ENCODE measurements at regions of chr14 and their contacts with region 1.

Region 1: DNA sequence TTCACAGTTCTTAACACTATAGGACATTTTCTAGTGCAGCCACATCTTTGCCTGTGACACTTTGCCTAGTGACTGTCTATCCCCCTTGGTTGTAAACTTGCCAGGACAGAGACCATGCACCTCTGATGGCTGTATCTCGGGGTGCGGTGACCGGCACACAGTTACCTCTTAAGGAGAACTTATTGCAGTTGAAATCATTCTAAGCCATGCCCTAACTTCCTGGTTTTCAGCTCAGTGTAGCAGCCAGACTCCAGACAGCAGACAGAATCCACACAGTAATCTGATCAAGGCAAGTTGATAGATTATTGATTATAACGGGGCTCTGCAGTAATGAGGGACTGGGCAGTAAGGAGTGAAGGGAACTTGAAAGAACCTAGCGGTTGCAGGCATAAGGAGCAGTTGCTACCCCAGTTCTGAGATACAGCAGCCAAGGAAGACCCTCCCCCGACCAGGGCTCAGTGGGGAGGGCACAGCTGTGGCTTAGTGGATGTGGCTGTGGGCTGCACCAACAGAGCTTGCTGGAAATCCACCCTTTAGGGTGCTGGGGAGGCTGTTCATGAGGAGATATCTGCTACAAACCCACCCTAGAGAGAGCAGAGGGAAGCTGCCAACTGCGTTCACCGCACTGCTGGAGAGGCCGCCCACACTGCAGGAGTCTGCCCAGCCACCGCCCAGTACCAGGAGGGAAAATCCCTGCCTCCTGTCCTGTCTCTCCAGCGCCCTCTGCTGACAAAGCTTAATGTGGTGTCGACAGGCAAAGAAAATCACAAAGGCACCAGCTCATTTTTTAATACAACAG is 58.2 kb upstream of the BEGAIN start:
- DNase-seq: peak; percentile 97
- H3K4me3 Mint-ChIP-seq: no peak overlapping the region
- H3K27ac Mint-ChIP-seq: no peak overlapping the region
- H3K4me1 Mint-ChIP-seq: peaks cover 30% of the 10 kb centered on the region
- H3K27me3 Mint-ChIP-seq: no peaks in the 10 kb centered on the region

Region 2: GRCh38 chr14:100383727-100384158 is 261.6 kb before region 1 on chr14:
- CTCF ChIA-PET with region 1: interaction called, 125 read pairs
- intact Hi-C with region 1: loop called (anchors 1 kb)
- DNase-seq: peak; percentile 73
- H3K4me3 Mint-ChIP-seq: no peak overlapping the region
- H3K27ac Mint-ChIP-seq: no peak overlapping the region
- H3K4me1 Mint-ChIP-seq: peaks cover 24% of the 10 kb centered on the region
- H3K27me3 Mint-ChIP-seq: no peaks in the 10 kb centered on the region

Region 3: DNA sequence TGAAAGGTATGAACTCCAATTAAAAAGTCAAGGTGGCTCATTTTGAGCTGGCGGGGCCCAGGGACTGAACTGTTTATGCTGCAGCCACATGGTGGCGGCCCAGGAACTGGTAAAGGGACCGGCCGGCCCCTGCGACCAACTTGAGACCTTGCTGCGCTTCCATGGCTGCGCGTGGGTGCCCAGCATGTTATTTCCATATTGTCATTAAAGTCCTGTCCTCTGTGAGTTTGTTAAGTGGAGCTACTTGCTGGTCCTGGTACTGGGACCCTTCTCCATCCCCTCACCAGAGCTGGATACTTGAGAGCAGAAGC is 120.5 kb before region 1 on chr14:
- CTCF ChIA-PET with region 1: interaction called, 32 read pairs
- intact Hi-C with region 1: loop called (anchors 1 kb)
- DNase-seq: peak; percentile 47
- H3K4me3 Mint-ChIP-seq: no peak overlapping the region
- H3K27ac Mint-ChIP-seq: no peak overlapping the region
- H3K4me1 Mint-ChIP-seq: no peaks in the 10 kb centered on the region
- H3K27me3 Mint-ChIP-seq: no peaks in the 10 kb centered on the region

Region 4: DNA sequence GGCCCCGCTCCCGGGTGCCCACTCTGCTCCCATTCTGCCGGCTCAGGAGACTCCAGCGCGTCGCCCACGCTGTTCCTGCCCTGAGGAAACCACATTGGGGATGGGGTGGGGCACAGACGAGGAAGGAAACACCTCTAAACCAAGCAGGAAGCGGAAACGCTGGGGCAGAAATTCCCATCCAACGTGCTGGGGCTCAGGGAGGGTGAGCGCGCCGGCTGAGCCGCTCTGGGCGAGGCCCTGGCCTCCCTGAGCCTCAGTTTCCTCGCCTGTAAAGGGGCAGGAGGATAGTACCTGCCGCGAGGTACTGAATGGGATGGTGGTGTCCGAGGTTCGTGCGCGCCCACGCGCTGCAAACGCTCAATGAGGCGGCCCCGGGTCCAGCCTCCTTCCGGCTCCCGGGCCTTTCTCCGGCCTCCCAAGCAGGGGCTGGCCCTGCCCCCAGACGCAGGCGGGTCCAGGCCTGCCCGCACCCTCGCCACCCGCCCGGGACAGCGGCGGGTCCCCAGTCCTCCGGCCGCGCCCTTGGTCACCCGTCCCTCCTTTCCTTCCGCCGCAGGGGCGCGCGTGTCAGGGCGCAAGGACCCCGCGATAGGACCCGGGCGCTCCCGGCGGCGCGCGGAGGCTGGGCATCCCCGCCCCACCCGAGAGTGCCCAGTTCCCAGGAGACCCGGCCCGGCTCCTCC is 58.8 kb before region 1 on chr14:
- CTCF ChIA-PET with region 1: interaction called, 9 read pairs
- intact Hi-C with region 1: loop called (anchors 1 kb)
- DNase-seq: peak; percentile 64
- H3K4me3 Mint-ChIP-seq: peak overlapping the region; percentile 76
- H3K27ac Mint-ChIP-seq: peak overlapping the region; percentile 42
- H3K4me1 Mint-ChIP-seq: no peaks in the 10 kb centered on the region
- H3K27me3 Mint-ChIP-seq: peaks cover 16% of the 10 kb centered on the region

Region 5: GRCh38 chr14:100634026-100634425 is 11.4 kb before region 1 on chr14:
- CTCF ChIA-PET with region 1: interaction called, 14 read pairs
- intact Hi-C with region 1: no loop called
- DNase-seq: no peak
- H3K4me3 Mint-ChIP-seq: no peak overlapping the region
- H3K27ac Mint-ChIP-seq: no peak overlapping the region
- H3K4me1 Mint-ChIP-seq: peaks cover 7% of the 10 kb centered on the region
- H3K27me3 Mint-ChIP-seq: no peaks in the 10 kb centered on the region